ENCODE measurements at regions of chr2 and their contacts with region 1.

Region 1: DNA sequence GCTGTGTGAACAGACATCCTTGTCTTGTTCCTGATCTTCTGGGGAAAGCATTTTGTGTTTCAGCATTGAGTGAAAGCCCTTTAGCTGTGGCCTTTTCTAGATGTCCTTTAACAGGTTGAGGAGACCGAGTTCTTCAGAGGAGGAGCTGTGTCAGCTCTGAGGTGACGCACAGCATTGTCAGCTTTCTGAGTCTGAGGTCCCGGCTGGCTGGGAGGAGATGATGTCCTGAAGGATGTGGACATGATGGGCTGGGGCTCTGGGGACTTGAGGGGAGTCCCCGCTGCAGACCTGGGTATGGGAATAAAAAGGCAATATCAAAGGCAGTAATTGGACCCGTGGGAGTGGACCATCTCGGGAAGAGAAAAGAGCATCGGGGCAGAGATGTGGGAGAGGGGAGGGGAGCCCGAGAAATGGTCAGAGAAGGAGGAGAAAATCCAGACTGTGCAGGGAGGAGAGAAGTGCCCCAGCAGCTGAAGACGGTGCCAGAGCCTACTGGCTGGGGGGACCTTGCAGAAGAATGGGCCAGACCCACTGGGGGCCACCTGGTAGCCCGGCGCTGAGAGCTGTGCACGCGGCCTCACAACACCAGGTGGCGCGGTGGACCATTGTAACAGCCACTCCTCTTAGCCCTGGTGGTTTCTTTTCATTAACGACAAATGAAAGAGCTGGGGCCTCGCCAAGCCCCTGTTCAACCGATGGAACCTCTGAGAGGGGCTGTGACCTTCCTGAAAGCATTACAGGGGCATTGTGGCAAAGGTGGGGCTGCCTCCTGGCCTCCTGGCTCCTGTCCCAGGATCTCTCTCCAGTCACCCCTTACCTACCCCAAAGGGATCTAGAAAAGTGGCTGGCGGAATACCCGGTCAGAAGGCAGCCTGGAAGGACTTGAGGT is 61.6 kb downstream of the ST3GAL5 start:
- DNase-seq: peak; percentile 79
- H3K4me3 ChIP-seq: no peak overlapping the region
- H3K27ac ChIP-seq: no peak overlapping the region
- H3K4me1 ChIP-seq: peaks cover 0 to 8% (median 1%) of the 10 kb centered on the region in 4 donors
- H3K27me3 ChIP-seq: no peaks in the 10 kb centered on the region
- CTCF ChIP-seq: peak; percentile 87 to 93 (median 91)
- EP300 ChIP-seq: no peak
- POLR2A ChIP-seq: no peak

Region 2: GRCh38 chr2:84424152-84424551 is 1403.1 kb before region 1 on chr2:
- in situ Hi-C with region 1: no loop called
- intact Hi-C with region 1: no loop called
- DNase-seq: no peak
- H3K4me3 ChIP-seq: no peak overlapping the region
- H3K27ac ChIP-seq: no peak overlapping the region
- H3K4me1 ChIP-seq: peaks cover 0 to 6% (median 0%) of the 10 kb centered on the region in 4 donors
- H3K27me3 ChIP-seq: no peaks in the 10 kb centered on the region
- CTCF ChIP-seq: peak in 3 of 5 experiments; percentile 19 to 32 (median 32)
- EP300 ChIP-seq: no peak
- POLR2A ChIP-seq: no peak

Region 3: DNA sequence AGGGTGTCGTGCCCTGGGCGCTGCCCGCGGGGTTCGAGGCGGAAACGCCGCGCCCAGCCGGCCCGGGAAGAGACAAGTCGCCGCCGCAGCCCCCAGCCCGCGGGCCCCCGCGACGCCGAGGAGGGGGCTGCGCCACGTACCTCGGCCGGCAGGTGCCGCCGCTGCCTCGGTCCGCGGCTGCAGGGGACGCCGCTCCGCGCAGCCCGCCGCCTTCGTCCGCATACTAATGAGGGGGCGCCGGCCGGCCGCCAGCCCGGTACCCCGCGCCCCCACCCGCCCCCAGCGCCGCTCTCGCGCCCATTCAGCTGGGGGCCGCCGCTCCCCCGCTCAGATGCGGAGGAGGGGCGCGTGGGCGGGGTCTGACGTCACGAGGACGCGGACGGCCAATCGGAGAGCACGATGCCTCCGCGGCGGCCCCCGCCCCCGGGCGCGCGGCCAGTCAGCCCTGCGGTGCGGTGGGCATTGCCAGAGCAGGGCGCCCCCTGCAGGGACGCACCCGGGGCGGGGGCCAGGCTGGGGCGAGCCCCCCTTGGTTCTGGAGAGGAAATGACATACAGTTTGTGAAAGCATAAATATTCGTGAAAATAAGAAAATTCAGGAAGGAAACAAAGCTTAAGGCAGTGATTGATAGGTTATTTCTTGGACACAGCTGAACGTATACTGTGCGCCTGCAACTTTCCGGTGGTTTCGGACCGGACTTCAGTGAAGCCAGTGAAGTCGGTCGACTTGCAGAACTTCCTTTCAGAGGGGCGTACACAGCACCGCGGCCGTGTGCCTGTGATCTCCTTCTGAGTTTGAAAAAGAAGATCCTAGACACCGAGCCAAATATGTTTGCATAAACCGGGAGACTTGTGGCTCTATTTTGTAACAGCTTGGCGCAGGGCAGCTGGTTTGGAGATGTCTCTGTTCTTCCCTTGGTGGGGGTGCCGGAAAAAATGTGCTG is 61.7 kb after region 1 on chr2 and contains the start of gene ST3GAL5:
- in situ Hi-C with region 1: no loop called
- intact Hi-C with region 1: loop called (anchors 5 kb)
- DNase-seq: peak; percentile 91
- H3K4me3 ChIP-seq: peak within 1 kb of the TSS; percentile 66 to 87 (median 72)
- H3K27ac ChIP-seq: peak within 1 kb of the TSS; percentile 82 to 87 (median 85)
- H3K4me1 ChIP-seq: peaks cover 14 to 42% (median 21%) of the 10 kb centered on the region in 4 donors
- H3K27me3 ChIP-seq: no peaks in the 10 kb centered on the region
- CTCF ChIP-seq: peak; percentile 48 to 69 (median 55)
- EP300 ChIP-seq: no peak
- POLR2A ChIP-seq: peak; percentile 55
- total RNA-seq, gene ST3GAL5: 3.0 to 20.2 (median 13.6) TPM

Region 4: GRCh38 chr2:86079981-86080911 is 253.0 kb after region 1 on chr2:
- in situ Hi-C with region 1: loop called (anchors 5 to 10 kb)
- intact Hi-C with region 1: loop called (anchors 2 kb)
- DNase-seq: peak; percentile 91
- H3K4me3 ChIP-seq: no peak overlapping the region
- H3K27ac ChIP-seq: peak overlapping the region; percentile 13 to 49 (median 41)
- H3K4me1 ChIP-seq: peaks cover 4 to 14% (median 11%) of the 10 kb centered on the region in 4 donors
- H3K27me3 ChIP-seq: no peaks in the 10 kb centered on the region
- CTCF ChIP-seq: peak; percentile 69 to 87 (median 78)
- EP300 ChIP-seq: no peak
- POLR2A ChIP-seq: peak; percentile 10

Region 5: GRCh38 chr2:86087936-86088850 is 261.0 kb after region 1 on chr2:
- in situ Hi-C with region 1: loop called in 1 of 4 experiments (anchors 5 kb)
- intact Hi-C with region 1: no loop called
- DNase-seq: no peak
- H3K4me3 ChIP-seq: no peak overlapping the region
- H3K27ac ChIP-seq: no peak overlapping the region
- H3K4me1 ChIP-seq: no peaks in the 10 kb centered on the region
- H3K27me3 ChIP-seq: no peaks in the 10 kb centered on the region
- CTCF ChIP-seq: peak in 3 of 5 experiments; percentile 18 to 29 (median 23)
- EP300 ChIP-seq: no peak
- POLR2A ChIP-seq: no peak